Mammary epithelial cell (primary cell): ENCODE measurements at regions of chr14 and their contacts with region 1.

Region 1: GRCh38 chr14:73295198-73295796 is 58.0 kb downstream of the PAPLN start:
- DNase-seq: peak; percentile 25
- H3K4me3 ChIP-seq: no peak overlapping the region
- H3K27ac ChIP-seq: no peak overlapping the region
- H3K4me1 ChIP-seq: no peaks in the 10 kb centered on the region
- H3K27me3 ChIP-seq: no peaks in the 10 kb centered on the region
- CTCF ChIP-seq: peak; percentile 66 to 82

Region 2: DNA sequence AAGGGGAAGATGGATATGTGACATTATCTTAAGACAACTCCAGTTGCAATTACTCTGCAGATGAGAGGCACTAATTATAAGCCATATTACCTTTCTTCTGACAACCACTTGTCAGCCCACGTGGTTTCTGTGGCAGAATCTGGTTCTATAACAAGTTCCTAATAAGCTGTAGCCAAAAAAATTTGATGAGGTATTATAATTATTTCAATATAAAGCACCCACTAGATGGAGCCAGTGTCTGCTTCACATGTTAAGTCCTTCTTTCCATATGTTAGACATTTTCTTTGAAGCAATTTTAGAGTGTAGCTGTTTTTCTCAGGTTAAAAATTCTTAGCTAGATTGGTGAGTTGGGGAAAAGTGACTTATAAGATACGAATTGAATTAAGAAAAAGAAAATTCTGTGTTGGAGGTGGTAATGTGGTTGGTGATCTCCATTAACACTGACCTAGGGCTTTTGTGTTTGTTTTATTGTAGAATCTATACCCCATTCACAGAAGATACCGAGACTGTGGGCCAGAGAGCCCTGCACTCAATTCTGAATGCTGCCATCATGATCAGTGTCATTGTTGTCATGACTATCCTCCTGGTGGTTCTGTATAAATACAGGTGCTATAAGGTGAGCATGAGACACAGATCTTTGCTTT is 122.1 kb before region 1 on chr14:
- CTCF ChIA-PET with region 1: interaction called, 10 read pairs
- dilution Hi-C with region 1: no loop called
- in situ Hi-C with region 1: no loop called
- intact Hi-C with region 1: loop called (anchors 1 kb)
- DNase-seq: peak; percentile 9
- H3K4me3 ChIP-seq: no peak overlapping the region
- H3K27ac ChIP-seq: no peak overlapping the region
- H3K4me1 ChIP-seq: no peaks in the 10 kb centered on the region
- H3K27me3 ChIP-seq: no peaks in the 10 kb centered on the region
- CTCF ChIP-seq: peak; percentile 38 to 52

Region 3: DNA sequence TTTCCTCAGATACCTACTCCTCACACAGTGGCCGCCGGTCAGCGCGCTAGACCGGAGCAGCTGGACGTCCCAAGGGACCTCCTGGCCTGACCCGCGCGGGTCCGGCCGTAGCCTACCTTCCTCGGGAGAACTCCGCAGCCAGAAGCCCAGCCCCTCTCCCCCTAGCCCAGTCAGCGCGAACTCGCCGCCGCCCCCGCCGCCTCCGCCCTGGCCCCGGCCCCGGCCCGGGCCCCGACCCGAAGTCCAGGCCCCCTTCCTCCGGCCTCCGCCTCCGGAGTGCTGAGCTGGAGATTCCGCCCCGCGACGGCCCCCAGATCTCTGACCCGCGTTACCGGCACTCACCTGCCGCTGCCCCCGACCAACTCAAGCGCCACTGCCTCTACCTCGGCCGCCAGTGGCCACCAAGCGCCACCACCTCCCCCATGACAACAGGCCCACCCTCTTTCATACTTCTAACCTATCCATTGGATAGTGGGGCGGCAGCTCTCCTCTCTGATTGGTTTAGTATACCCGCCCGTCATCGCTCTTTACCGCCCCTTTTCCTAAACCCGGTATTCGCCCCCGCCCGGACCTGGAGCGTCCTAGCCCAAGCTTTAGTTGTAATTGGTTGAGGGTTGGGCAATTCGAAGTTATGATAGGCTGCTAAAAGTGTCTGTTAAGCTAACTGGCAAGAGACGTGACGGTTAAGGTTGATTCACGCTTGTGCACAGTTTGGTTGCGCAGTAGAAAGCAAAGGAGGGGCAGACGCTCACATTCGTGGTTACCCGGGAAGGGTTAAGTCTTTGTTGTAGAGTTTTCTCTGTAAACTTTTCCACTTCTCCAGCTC is 163.1 kb after region 1 on chr14 and contains the start of gene NUMB:
- CTCF ChIA-PET with region 1: interaction called, 6 read pairs
- dilution Hi-C with region 1: loop called (anchors 25 kb)
- in situ Hi-C with region 1: no loop called
- intact Hi-C with region 1: no loop called
- DNase-seq: peak; percentile 100
- H3K4me3 ChIP-seq: peak within 1 kb of the TSS; percentile 96 to 99 (median 97)
- H3K27ac ChIP-seq: peak within 1 kb of the TSS; percentile 61
- H3K4me1 ChIP-seq: peaks cover 38% of the 10 kb centered on the region
- H3K27me3 ChIP-seq: no peaks in the 10 kb centered on the region
- CTCF ChIP-seq: no peak
- total RNA-seq, gene NUMB: 57.2 to 104 TPM

Region 4: DNA sequence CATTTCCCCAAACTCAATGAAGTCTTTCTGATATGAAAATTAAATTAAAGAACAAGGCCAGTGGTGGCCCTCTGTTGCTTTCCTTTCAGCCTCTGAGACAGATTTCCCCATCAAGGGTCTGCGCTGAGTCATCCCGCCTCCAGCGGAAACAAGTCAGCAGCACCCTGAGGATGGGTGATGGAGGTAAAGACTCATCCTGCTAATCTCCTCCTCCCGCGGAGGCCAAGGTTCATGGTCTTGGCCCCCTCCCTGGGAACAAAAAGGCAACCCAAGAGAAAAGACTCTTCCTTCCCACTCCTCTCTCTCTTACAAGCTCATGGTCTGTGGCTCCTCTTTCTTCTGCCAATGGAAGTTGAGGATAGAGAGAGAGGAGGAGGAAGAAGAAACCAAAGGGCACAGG is 172.1 kb after region 1 on chr14:
- CTCF ChIA-PET with region 1: interaction called, 34 read pairs
- dilution Hi-C with region 1: loop called (anchors 25 kb)
- in situ Hi-C with region 1: loop called (anchors 5 kb)
- intact Hi-C with region 1: loop called (anchors 1 kb)
- DNase-seq: no peak
- H3K4me3 ChIP-seq: no peak overlapping the region
- H3K27ac ChIP-seq: no peak overlapping the region
- H3K4me1 ChIP-seq: peaks cover 27% of the 10 kb centered on the region
- H3K27me3 ChIP-seq: no peaks in the 10 kb centered on the region
- CTCF ChIP-seq: no peak

Region 5: DNA sequence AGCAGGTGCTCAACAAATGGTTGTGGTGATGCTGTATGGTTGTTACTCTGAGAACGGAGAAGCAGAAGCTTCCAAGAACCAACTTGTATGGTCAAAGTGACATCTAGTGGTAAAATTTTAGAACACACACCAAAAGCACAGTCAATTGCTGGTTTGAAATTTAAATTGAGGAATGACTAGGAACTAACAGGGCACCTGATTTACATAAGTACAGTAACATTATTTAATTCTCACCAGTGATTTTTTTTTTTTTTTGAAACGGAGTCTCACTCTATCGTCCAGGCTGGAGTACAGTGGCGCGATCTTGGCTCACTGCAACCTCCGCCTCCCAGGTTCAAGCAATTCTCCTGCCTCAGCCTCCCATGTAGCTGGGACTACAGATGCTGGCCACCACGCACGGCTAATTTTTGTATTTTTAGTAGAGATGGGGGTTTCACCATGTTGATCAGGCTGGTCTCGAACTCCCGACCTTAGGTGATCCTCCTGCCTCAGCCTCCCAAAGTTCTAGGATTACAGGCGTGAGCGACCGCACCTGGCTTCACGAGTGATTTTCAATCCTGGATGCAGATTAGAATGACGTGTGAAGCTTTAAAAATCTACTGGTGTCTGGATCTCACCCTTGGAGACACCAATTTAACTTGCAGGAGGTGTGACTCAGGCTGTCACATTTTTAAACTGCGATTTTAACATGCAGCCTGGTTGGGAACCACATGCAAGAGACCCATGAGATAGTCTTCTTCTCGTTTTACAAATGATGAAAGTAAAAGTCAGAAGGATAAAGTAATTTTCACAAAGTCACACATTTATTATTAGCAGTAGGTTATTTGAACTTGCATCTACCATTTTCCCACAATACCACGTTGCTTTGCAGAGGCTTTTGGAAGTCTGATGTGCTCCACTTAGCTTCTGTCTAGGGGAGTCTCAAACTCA is 177.2 kb after region 1 on chr14:
- CTCF ChIA-PET with region 1: interaction called, 34 read pairs
- dilution Hi-C with region 1: loop called (anchors 25 kb)
- in situ Hi-C with region 1: loop called (anchors 5 kb)
- intact Hi-C with region 1: loop called (anchors 1 kb)
- DNase-seq: peak; percentile 54
- H3K4me3 ChIP-seq: no peak overlapping the region
- H3K27ac ChIP-seq: no peak overlapping the region
- H3K4me1 ChIP-seq: peaks cover 3% of the 10 kb centered on the region
- H3K27me3 ChIP-seq: no peaks in the 10 kb centered on the region
- CTCF ChIP-seq: peak; percentile 64 to 67

Region 6: DNA sequence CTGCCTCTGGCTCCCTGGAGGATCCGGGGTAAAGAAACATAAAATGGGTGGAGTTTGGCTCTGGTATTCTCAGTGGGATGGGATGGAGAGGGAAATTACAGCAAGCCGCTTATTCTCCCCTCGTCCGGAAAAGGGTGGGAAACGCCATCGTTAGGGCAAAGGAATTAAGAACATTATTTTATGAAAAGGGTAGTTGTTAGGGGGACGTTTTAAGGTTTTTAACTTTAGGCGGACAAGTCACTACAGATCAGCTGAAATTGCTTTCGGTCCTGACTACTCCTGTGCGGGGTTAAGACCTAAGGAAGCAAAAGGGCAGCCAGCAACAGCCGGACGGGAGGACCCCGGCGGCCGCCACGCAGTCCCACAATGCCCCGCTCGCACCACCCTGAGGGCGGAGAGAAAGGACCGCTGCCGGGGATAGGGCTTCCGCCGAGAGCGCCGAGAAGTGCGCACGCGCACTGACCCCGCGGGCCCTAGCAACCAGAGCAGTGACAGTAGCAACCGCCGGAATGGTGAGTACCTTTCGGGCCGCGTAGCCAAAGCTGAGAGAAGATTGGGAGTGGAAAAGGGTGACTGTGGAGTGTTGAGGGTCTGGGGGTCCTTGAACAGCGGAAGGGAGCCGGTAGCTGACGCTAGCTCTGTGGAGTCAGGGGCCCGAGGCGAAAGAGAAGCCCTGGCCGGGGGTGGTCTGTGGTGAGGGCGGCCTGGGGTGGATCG is 349.4 kb after region 1 on chr14 and contains the start of gene DNAL1:
- CTCF ChIA-PET with region 1: no interaction called
- dilution Hi-C with region 1: no loop called
- in situ Hi-C with region 1: loop called in 1 of 2 experiments (anchors 25 kb)
- intact Hi-C with region 1: no loop called
- DNase-seq: peak; percentile 85
- H3K4me3 ChIP-seq: peak within 1 kb of the TSS; percentile 82 to 86 (median 85)
- H3K27ac ChIP-seq: peak within 1 kb of the TSS; percentile 76
- H3K4me1 ChIP-seq: peaks cover 6% of the 10 kb centered on the region
- H3K27me3 ChIP-seq: no peaks in the 10 kb centered on the region
- CTCF ChIP-seq: no peak
- total RNA-seq, gene DNAL1: 10.2 to 14.5 TPM